ENCODE measurements at regions of chr11 and their contacts with region 1.

Region 1: DNA sequence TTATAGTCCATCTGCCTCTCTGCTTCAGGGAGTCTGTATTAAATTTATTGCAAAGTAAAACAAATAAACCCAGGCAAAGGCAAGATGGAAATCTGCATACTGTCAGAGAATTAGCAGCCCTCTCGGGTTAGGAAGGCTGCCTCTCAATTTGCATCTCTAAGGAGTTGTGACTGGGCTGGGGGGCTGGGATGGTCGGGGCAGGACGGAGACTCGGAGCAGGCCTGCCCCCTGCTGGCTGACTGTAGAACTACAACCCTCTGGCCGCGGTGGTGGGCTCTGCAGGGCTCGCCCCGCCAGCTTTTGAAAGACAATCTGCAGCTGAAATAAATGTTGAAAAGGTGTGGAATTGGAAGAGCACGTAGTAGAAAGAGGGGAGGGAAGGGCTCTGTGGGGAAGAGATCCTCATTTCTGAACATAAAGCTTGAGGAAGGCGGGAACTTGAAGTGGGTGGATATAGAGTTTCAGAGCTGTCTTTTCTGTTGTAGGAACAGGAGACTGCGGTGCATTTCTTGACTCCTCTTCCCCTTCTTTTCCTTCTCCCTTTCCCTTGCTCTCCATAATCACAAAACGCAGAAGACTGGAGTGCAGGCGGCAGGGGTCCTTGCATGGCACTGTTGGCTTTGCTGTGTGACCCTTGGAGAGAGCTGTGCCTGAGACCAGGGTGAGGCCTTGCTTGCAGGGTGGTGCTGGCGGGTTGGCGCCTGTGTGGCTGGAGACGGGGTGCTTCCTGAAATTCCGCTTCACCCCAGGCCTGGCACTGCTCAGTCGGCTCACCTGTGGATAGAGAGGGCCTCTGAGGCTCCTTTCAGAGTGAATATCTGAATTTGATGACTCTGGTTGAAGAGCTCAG is 22.6 kb upstream of the PKNOX2 start:
- DNase-seq: peak; percentile 64
- H3K4me3 Mint-ChIP-seq: no peak overlapping the region
- H3K27ac Mint-ChIP-seq: no peak overlapping the region
- H3K4me1 Mint-ChIP-seq: peaks cover 9% of the 10 kb centered on the region
- H3K27me3 Mint-ChIP-seq: peaks cover 54% of the 10 kb centered on the region
- CTCF ChIP-seq: peak; percentile 85

Region 2: DNA sequence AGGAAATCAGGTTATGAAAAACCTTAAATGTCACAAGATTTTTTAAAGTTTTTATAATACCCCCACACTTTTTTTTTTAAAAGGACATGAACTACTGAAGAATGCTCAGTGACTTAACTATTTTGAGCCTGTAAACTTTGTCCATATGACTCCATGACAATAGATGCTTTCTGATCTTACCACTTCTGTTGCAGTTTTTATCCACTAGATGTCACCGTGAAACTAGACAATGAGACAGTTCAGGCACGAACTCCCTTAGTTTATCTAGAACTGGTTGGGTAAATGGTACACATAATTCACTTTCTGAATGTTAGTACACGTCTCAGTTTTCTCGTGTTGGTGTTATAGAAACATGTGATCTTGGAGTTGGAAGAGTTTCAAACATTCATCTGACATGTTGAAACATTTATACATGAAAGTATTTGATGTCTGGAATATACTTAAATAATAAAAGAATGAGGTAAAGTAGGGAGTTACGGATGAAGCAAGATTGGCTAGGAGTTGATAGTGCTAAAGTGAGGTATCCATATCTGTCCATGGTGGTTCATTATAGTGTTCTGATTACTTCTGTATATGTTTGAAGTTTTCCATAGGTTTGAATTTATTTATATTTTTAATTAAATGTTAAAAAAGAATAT is 179.8 kb before region 1 on chr11:
- CTCF ChIA-PET with region 1: no interaction called
- intact Hi-C with region 1: loop called (anchors 1 kb)
- DNase-seq: peak; percentile 11
- H3K4me3 Mint-ChIP-seq: no peak overlapping the region
- H3K27ac Mint-ChIP-seq: no peak overlapping the region
- H3K4me1 Mint-ChIP-seq: no peaks in the 10 kb centered on the region
- H3K27me3 Mint-ChIP-seq: no peaks in the 10 kb centered on the region
- CTCF ChIP-seq: no peak

Region 3: DNA sequence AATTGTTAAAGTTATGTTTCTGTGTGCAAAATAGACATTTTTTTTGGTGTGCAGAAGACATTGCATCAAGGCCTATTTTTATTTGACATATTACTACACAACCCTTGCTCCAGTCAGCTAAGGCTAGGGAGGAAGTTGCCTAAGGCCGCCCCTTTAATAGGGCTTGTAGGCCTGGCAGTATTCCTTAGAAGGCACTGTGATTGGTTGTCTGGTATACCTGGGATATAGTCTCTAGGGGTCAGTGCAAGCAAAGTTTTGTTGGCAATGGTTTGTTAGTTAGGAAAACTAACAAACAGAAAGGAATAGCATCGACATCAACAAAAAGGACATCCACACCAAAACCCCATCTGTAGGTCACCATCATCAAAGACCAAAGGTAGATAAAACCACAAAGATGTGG is 171.0 kb before region 1 on chr11:
- CTCF ChIA-PET with region 1: interaction called, 3 read pairs
- intact Hi-C with region 1: loop called (anchors 2 kb)
- DNase-seq: peak; percentile 17
- H3K4me3 Mint-ChIP-seq: no peak overlapping the region
- H3K27ac Mint-ChIP-seq: no peak overlapping the region
- H3K4me1 Mint-ChIP-seq: no peaks in the 10 kb centered on the region
- H3K27me3 Mint-ChIP-seq: no peaks in the 10 kb centered on the region
- CTCF ChIP-seq: no peak

Region 4: GRCh38 chr11:125091247-125091876 is 50.5 kb before region 1 on chr11:
- CTCF ChIA-PET with region 1: interaction called, 8 read pairs
- intact Hi-C with region 1: loop called (anchors 1 kb)
- DNase-seq: no peak
- H3K4me3 Mint-ChIP-seq: no peak overlapping the region
- H3K27ac Mint-ChIP-seq: peak overlapping the region; percentile 71
- H3K4me1 Mint-ChIP-seq: peaks cover 9% of the 10 kb centered on the region
- H3K27me3 Mint-ChIP-seq: no peaks in the 10 kb centered on the region
- CTCF ChIP-seq: no peak

Measured in Calu3 (cell line).